ENCODE measurements at regions of chr1 and their contacts with region 1.

Region 1: DNA sequence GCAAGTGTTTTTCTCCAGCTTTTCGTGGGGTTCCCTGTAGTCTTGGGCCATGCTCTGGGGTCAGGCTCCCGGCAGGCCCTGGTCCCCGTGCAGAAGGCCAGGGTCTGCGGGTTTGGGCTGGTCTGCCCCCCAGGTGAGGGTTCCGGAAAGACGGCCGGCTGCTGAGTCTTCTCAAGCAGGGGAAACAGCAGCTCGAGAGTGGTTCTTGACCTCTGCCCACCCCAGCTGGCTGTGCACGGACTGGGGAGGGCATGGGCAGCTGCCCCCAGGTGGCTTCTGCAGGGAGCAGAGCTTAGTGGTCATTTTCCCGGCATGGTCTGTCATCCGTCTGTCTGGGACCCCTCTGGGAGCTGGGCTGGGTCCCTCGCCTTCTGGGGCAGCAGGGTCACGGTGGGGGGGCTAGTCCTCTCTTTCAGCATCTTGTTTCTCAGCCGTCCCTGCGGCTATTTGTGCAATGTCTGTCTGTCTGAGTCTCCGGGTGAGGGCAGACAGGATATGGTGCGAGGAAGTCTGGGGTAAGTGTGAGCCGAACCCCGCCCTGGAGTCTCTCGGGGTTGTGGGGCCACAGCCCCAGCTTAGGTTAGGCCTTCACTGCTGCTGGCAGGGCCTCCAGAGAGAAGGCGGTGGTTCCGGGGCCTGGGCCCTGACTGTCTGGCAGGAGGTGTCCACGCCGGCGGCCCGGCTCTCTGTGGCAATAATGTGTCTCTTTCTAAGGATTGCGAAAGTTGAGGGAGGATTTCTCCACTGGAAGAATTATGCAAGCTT is 6.1 kb downstream of the SKI start:
- DNase-seq: peak; percentile 81
- H3K4me3 Mint-ChIP-seq: peak overlapping the region; percentile 90
- H3K27ac Mint-ChIP-seq: peak overlapping the region; percentile 92
- H3K4me1 Mint-ChIP-seq: peaks cover 70% of the 10 kb centered on the region
- H3K27me3 Mint-ChIP-seq: no peaks in the 10 kb centered on the region

Region 2: DNA sequence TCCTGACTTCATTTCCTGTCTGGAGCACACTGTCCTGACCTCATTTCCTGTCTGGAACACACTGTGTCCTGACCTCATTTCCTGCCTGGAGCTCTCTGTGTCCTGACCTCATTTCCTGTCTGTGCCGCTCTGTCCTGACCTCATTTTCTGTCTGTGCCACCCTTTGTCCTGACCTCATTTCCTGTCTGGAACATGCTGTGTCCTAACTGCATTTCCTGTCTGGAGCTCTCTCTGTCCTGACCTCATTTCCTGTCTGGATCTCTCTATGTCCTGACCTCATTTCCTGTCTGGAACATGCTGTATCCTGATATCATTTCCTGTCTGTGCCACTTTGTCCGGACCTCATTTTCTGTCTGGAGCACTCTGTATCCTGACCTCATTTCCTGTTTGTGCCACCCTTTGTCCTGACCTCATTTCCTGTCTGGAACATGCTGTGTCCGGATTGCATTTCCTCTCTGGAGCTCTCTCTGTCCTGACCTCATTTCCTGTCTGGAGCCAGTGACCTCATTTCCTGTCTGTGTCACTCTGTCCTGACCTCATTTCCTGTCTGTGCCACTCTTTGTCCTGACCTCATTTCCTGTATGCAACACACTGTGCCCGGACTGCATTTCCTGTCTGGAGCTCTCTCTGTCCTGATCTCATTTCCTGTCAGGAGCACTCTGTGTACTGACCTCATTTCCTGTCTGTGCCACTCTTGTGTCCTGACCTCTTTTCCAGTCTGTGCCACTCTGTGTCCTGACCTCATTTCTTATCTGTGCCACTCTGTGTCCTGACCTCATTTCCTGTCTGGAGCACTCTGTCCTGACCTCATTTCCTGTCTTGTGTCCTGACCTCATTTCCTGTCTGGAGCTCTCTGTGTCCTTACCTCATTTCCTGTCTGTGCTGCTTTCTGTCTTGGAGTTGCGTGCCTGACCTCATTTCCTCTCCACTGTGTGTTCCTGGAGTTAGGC is 21.5 kb after region 1 on chr1:
- CTCF ChIA-PET with region 1: interaction called, 14 read pairs
- POLR2A ChIA-PET with region 1: no interaction called
- DNase-seq: peak; percentile 88
- H3K4me3 Mint-ChIP-seq: no peak overlapping the region
- H3K27ac Mint-ChIP-seq: no peak overlapping the region
- H3K4me1 Mint-ChIP-seq: peaks cover 40% of the 10 kb centered on the region
- H3K27me3 Mint-ChIP-seq: no peaks in the 10 kb centered on the region

Region 3: DNA sequence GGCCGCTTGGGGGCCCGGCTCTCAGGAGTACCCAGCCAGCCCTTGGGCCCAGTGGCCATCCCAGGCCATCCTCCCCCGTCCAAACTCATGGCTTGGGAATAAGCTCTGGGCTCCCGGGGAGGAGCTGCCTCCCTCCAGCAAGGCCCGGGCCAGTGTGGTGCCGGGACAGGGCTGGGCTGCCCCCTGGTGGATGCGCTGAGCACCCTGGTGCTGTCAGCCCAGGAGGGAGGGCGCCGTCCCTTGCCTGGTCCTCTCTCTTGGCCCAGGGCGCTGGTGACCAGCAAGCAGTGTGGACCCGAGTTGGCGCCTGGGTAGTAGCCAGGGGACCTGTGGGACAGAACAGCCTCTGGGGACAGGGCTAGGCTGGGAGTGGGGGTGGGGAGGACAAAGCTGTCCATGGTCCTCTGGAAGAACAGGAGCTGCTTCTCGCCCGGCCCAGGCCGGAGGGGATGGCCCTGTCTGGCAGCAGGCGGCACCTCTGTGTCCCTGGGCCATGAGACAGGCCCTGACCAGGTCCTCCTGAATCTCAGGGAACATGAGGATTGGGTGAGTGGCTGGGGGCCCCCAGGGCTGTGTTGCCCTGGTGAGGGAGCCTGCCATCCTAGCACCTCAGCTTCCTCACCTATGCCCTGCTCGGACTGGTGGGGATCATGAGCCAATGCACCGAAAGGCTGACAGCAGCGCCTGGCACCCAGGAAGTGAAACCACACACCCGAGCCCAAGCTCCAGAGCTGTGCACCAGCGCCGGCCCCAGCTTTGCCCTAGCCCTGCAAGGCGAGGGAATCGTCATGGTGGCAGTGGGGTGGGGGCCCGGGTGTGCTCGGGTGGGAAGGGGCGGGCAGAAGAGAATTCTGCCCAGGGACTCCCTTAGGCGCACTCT is 147.8 kb after region 1 on chr1:
- CTCF ChIA-PET with region 1: interaction called, 15 read pairs
- POLR2A ChIA-PET with region 1: no interaction called
- DNase-seq: peak; percentile 78
- H3K4me3 Mint-ChIP-seq: no peak overlapping the region
- H3K27ac Mint-ChIP-seq: peak overlapping the region; percentile 54
- H3K4me1 Mint-ChIP-seq: peaks cover 4% of the 10 kb centered on the region
- H3K27me3 Mint-ChIP-seq: no peaks in the 10 kb centered on the region

Measured in activated CD4-positive, alpha-beta T cell treated with anti-CD3 and anti-CD28 coated beads, Interleukin-2, amount 10 ng/mL, durations not matched to agents 7 days and 5 days (primary cell).